ENCODE measurements at regions of chr11 and their contacts with region 1.

Region 1: GRCh38 chr11:131345406-131345805 is 25.0 kb upstream of the NTM start:
- DNase-seq: no peak

Region 2: GRCh38 chr11:131290185-131290584 is 55.2 kb before region 1 on chr11:
- intact Hi-C with region 1: loop called in 1 of 2 experiments (anchors 2 kb)
- DNase-seq: no peak

Measured in posterior vena cava (tissue), 2 donors.